Activated CD4-positive, alpha-beta memory T cell treated with anti-CD3 and anti-CD28 coated beads for 36 hours (primary cell): ENCODE measurements at regions of chr10 and their contacts with region 1.

Region 1: GRCh38 chr10:102394079-102394800 is 1.3 kb upstream of the NFKB2 start:
- DNase-seq: peak; percentile 99
- H3K4me3 Mint-ChIP-seq: peak overlapping the region; percentile 94
- H3K27ac Mint-ChIP-seq: peak overlapping the region; percentile 99
- H3K4me1 Mint-ChIP-seq: peaks cover 39% of the 10 kb centered on the region
- H3K27me3 Mint-ChIP-seq: no peaks in the 10 kb centered on the region

Region 2: DNA sequence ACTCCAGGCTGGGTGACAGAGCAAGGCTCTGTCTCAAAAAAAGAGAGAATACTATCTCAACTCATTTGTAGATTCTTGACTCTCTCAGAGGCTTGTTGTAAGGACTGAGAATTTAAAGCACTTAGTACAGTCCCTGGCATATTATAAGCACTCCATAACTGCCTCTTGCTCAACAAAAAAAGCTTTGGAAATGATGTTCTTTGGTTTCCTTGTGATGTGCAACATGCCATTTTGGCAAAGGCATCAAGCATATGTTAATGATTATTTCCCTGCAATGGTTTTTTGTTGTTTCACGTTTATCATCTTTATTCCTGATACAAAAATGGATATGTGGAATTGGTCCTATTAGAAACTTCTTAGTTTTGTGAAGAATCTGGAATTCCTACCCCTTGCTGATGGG is 226.4 kb before region 1 on chr10:
- CTCF ChIA-PET with region 1: interaction called, 11 read pairs
- POLR2A ChIA-PET with region 1: interaction called, 4 read pairs
- intact Hi-C with region 1: loop called (anchors 2 kb)
- DNase-seq: no peak
- H3K4me3 Mint-ChIP-seq: no peak overlapping the region
- H3K27ac Mint-ChIP-seq: no peak overlapping the region
- H3K4me1 Mint-ChIP-seq: peaks cover 5% of the 10 kb centered on the region
- H3K27me3 Mint-ChIP-seq: no peaks in the 10 kb centered on the region

Region 3: GRCh38 chr10:102408728-102409603 is 14.7 kb after region 1 on chr10:
- CTCF ChIA-PET with region 1: interaction called, 45 read pairs
- POLR2A ChIA-PET with region 1: interaction called, 12 read pairs
- intact Hi-C with region 1: no loop called
- DNase-seq: peak; percentile 85
- H3K4me3 Mint-ChIP-seq: peak overlapping the region; percentile 74
- H3K27ac Mint-ChIP-seq: peak overlapping the region; percentile 3
- H3K4me1 Mint-ChIP-seq: peaks cover 30% of the 10 kb centered on the region
- H3K27me3 Mint-ChIP-seq: peaks cover 22% of the 10 kb centered on the region

Region 4: GRCh38 chr10:102450194-102450938 is 56.1 kb after region 1 on chr10:
- CTCF ChIA-PET with region 1: interaction called, 20 read pairs
- POLR2A ChIA-PET with region 1: interaction called, 36 read pairs
- intact Hi-C with region 1: loop called (anchors 1 kb)
- DNase-seq: peak; percentile 90
- H3K4me3 Mint-ChIP-seq: peak overlapping the region; percentile 94
- H3K27ac Mint-ChIP-seq: peak overlapping the region; percentile 94
- H3K4me1 Mint-ChIP-seq: peaks cover 35% of the 10 kb centered on the region
- H3K27me3 Mint-ChIP-seq: no peaks in the 10 kb centered on the region

Region 5: GRCh38 chr10:102583435-102584417 is 189.5 kb after region 1 on chr10:
- CTCF ChIA-PET with region 1: interaction called, 9 read pairs
- POLR2A ChIA-PET with region 1: no interaction called
- intact Hi-C with region 1: loop called (anchors 5 kb)
- DNase-seq: peak; percentile 90
- H3K4me3 Mint-ChIP-seq: no peak overlapping the region
- H3K27ac Mint-ChIP-seq: no peak overlapping the region
- H3K4me1 Mint-ChIP-seq: peaks cover 13% of the 10 kb centered on the region
- H3K27me3 Mint-ChIP-seq: no peaks in the 10 kb centered on the region

Region 6: GRCh38 chr10:102604379-102604960 is 210.2 kb after region 1 on chr10:
- CTCF ChIA-PET with region 1: no interaction called
- POLR2A ChIA-PET with region 1: no interaction called
- intact Hi-C with region 1: no loop called
- DNase-seq: no peak
- H3K4me3 Mint-ChIP-seq: no peak overlapping the region
- H3K27ac Mint-ChIP-seq: no peak overlapping the region
- H3K4me1 Mint-ChIP-seq: peaks cover 19% of the 10 kb centered on the region
- H3K27me3 Mint-ChIP-seq: no peaks in the 10 kb centered on the region